PC-3 (cell line): ENCODE measurements at regions of chr7 and their contacts with region 1.

Region 1: DNA sequence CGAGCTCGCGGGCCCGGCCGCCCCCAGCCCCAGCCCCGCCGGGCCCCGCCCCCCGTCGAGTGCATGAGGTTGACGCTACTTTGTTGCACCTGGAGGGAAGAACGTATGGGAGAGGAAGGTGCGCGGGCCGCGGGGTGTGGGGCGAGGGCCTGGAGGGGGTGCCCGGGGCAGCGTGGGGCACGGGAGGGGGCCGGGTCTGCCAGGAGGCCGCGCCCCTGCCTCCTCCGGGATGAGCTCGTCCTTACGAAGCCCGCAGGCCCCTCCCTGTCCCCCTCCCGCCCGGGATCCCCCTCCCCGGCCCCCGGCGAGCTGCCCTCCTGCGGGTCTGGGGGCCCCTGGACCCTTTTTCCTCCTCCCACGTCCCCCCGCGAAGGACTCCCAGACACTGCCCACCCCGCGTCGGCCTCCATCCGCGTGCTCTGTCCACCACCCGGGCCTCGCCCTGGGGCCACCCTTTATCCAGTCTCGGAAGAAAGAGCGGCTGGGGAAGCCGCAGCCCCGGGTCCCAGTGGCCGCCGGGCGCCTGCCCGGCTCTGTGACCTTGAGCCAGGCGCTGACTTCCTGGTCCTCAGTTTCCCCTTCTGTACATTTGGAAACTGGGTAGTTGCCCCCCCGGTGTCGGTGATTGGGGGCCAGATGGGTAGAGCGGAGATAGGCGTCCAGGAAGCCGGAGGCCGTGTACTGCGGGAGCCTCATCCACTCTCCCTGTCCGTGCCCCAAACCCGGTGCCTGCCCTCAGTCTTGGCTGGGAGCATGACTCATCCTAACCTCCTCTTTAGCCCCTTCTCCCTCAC is 521 bp downstream of the LIMK1 start:
- DNase-seq: peak; percentile 31
- ATAC-seq: peak; percentile 54
- H3K4me3 ChIP-seq: peak overlapping the region; percentile 86
- H3K27ac ChIP-seq: peak overlapping the region; percentile 52
- H3K4me1 ChIP-seq: peaks cover 17% of the 10 kb centered on the region
- H3K27me3 ChIP-seq: no peaks in the 10 kb centered on the region
- CTCF ChIP-seq: no peak

Region 2: GRCh38 chr7:74043523-74043951 is 40.6 kb before region 1 on chr7:
- CTCF ChIA-PET with region 1: no interaction called
- POLR2A ChIA-PET with region 1: no interaction called
- intact Hi-C with region 1: no loop called
- DNase-seq: no peak
- ATAC-seq: peak; percentile 21; the same call in 1 of the 2 replicates
- H3K4me3 ChIP-seq: no peak overlapping the region
- H3K27ac ChIP-seq: no peak overlapping the region
- H3K4me1 ChIP-seq: no peaks in the 10 kb centered on the region
- H3K27me3 ChIP-seq: no peaks in the 10 kb centered on the region
- CTCF ChIP-seq: no peak

Region 3: GRCh38 chr7:74115326-74115725 is 31.2 kb after region 1 on chr7:
- CTCF ChIA-PET with region 1: no interaction called
- POLR2A ChIA-PET with region 1: interaction called, 10 read pairs
- intact Hi-C with region 1: no loop called
- DNase-seq: no peak
- ATAC-seq: no peak
- H3K4me3 ChIP-seq: no peak overlapping the region
- H3K27ac ChIP-seq: no peak overlapping the region
- H3K4me1 ChIP-seq: no peaks in the 10 kb centered on the region
- H3K27me3 ChIP-seq: no peaks in the 10 kb centered on the region
- CTCF ChIP-seq: peak; percentile 35; the same call in 1 of the 2 replicates

Region 4: GRCh38 chr7:74173866-74174605 is 89.9 kb after region 1 on chr7 and contains the start of gene EIF4H:
- CTCF ChIA-PET with region 1: no interaction called
- POLR2A ChIA-PET with region 1: interaction called, 3 read pairs
- intact Hi-C with region 1: loop called (anchors 2 kb)
- DNase-seq: peak; percentile 95
- ATAC-seq: peak; percentile 97
- H3K4me3 ChIP-seq: peak within 1 kb of the TSS; percentile 93
- H3K27ac ChIP-seq: peak within 1 kb of the TSS; percentile 46
- H3K4me1 ChIP-seq: peaks cover 24% of the 10 kb centered on the region
- H3K27me3 ChIP-seq: no peaks in the 10 kb centered on the region
- CTCF ChIP-seq: no peak
- total RNA-seq, gene EIF4H: 339 and 357 TPM in 2 replicates